B cell (primary cell): ENCODE measurements at regions of chr14 and their contacts with region 1.

Region 1: DNA sequence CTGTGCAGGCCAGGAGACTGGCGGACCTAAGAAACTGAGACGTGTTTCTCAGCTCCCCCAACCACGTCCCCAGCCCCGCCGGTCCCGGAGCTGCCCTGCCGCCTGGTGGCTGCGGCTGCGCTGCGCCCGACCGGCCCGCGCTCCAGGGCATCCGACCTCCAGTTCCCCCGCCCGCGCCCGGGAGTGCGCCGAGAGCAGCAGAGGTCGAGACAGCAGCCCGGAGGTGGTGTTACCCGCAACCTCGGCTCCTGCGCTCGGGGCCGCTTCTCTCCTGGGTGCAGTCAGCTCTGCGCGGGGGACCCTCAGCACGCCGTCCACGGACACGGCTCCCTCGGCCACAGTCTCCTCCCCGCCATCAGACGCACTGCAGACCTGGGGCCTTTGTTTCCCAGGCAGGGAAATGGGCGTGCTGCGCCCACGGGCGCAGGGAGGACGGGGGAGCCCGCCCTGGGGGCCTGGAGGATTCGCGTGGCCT is 21.6 kb upstream of the GPR132 start:
- DNase-seq: peak; percentile 89
- ATAC-seq: peak; percentile 86
- H3K4me3 ChIP-seq: peak overlapping the region in 4 of 5 experiments; percentile 55 to 67 (median 60)
- H3K4me3 Mint-ChIP-seq: peak overlapping the region; percentile 85
- H3K27ac ChIP-seq: peak overlapping the region in 1 of 2 donors; percentile 26
- H3K27ac Mint-ChIP-seq: peak overlapping the region; percentile 37
- H3K4me1 ChIP-seq: peaks cover 9 to 17% of the 10 kb centered on the region in 2 donors
- H3K4me1 Mint-ChIP-seq: peaks cover 16% of the 10 kb centered on the region
- H3K27me3 ChIP-seq: peaks cover 0 to 30% (median 9%) of the 10 kb centered on the region in 4 experiments
- H3K27me3 Mint-ChIP-seq: peaks cover 16% of the 10 kb centered on the region
- CTCF ChIP-seq: peak; percentile 78

Region 2: GRCh38 chr14:104913435-104913834 is 173.4 kb before region 1 on chr14:
- CTCF ChIA-PET with region 1: no interaction called
- POLR2A ChIA-PET with region 1: no interaction called
- intact Hi-C with region 1: no loop called
- DNase-seq: no peak
- ATAC-seq: no peak
- H3K4me3 ChIP-seq: no peak overlapping the region
- H3K4me3 Mint-ChIP-seq: no peak overlapping the region
- H3K27ac ChIP-seq: no peak overlapping the region
- H3K27ac Mint-ChIP-seq: no peak overlapping the region
- H3K4me1 ChIP-seq: no peaks in the 10 kb centered on the region
- H3K4me1 Mint-ChIP-seq: no peaks in the 10 kb centered on the region
- H3K27me3 ChIP-seq: no peaks in the 10 kb centered on the region
- H3K27me3 Mint-ChIP-seq: peaks cover 16% of the 10 kb centered on the region
- CTCF ChIP-seq: no peak

Region 3: DNA sequence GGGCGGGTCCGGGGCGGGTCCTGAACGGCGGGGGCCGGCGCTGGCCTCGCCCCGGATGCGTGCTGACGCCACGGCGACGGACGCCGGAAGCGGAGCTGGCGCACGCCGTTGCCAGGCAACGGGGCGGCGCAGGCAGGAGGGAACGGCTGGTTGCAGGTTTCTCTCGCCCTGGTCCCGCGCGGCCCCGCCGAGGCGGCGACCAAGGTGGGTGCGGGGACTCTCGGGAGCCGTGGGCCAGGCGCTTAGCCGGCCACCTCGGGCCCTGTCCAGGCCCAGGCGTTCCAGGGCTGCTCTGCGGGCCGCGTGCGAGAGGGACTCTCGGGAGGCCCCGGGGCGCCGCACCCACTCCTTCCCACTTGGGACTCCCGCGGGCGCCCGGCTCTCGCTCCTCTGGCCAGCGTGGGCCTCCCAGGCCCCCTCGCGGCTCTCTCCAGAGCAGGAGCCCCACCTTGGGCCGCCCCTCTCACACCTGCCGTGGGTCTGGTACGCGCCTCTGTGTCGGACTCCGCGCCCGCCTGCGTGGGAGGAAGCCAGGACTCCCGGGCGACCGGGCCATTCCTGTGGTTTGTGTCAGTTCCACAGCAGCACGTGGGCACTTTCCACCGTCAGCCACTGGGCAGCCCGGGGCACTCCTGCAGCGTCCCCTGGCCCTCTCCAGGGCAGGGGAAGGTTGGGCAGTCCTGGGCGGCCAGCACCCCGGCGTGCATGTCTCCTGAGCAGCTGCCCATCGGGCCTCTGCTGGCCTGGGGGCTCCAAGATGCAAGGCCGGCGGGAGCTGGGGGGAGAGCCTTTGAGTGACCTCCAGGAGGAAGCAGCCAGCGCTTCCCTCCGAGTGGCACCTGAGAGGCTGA is 101.0 kb before region 1 on chr14 and contains the start of gene CLBA1:
- CTCF ChIA-PET with region 1: interaction called, 4 read pairs
- POLR2A ChIA-PET with region 1: interaction called, 3 read pairs
- intact Hi-C with region 1: loop called (anchors 2 kb)
- DNase-seq: peak; percentile 95
- ATAC-seq: peak; percentile 92
- H3K4me3 ChIP-seq: peak within 1 kb of the TSS in 4 of 5 experiments; percentile 47 to 78 (median 62)
- H3K4me3 Mint-ChIP-seq: peak within 1 kb of the TSS; percentile 79
- H3K27ac ChIP-seq: peak within 1 kb of the TSS in 1 of 2 donors; percentile 73
- H3K27ac Mint-ChIP-seq: peak within 1 kb of the TSS; percentile 67
- H3K4me1 ChIP-seq: peaks cover 7 to 13% of the 10 kb centered on the region in 2 donors
- H3K4me1 Mint-ChIP-seq: peaks cover 7% of the 10 kb centered on the region
- H3K27me3 ChIP-seq: peaks cover 0 to 11% (median 5%) of the 10 kb centered on the region in 4 experiments
- H3K27me3 Mint-ChIP-seq: peaks cover 4% of the 10 kb centered on the region
- CTCF ChIP-seq: no peak
- total RNA-seq, gene CLBA1: 5.3 and 5.5 TPM in 2 replicates

Region 4: GRCh38 chr14:105065280-105066228 is 21.3 kb before region 1 on chr14 and contains the start of gene GPR132:
- CTCF ChIA-PET with region 1: interaction called, 192 read pairs
- POLR2A ChIA-PET with region 1: interaction called, 5 read pairs
- intact Hi-C with region 1: loop called (anchors 1 kb)
- DNase-seq: peak; percentile 96
- ATAC-seq: peak; percentile 78
- H3K4me3 ChIP-seq: peak within 1 kb of the TSS; percentile 81 to 100 (median 91)
- H3K4me3 Mint-ChIP-seq: peak within 1 kb of the TSS; percentile 87
- H3K27ac ChIP-seq: peak within 1 kb of the TSS; percentile 93 to 98
- H3K27ac Mint-ChIP-seq: peak within 1 kb of the TSS; percentile 98
- H3K4me1 ChIP-seq: peaks cover 79 to 95% of the 10 kb centered on the region in 2 donors
- H3K4me1 Mint-ChIP-seq: peaks cover 82% of the 10 kb centered on the region
- H3K27me3 ChIP-seq: no peaks in the 10 kb centered on the region
- H3K27me3 Mint-ChIP-seq: no peaks in the 10 kb centered on the region
- CTCF ChIP-seq: no peak
- total RNA-seq, gene GPR132: 54.5 and 63.2 TPM in 2 replicates

Region 5: DNA sequence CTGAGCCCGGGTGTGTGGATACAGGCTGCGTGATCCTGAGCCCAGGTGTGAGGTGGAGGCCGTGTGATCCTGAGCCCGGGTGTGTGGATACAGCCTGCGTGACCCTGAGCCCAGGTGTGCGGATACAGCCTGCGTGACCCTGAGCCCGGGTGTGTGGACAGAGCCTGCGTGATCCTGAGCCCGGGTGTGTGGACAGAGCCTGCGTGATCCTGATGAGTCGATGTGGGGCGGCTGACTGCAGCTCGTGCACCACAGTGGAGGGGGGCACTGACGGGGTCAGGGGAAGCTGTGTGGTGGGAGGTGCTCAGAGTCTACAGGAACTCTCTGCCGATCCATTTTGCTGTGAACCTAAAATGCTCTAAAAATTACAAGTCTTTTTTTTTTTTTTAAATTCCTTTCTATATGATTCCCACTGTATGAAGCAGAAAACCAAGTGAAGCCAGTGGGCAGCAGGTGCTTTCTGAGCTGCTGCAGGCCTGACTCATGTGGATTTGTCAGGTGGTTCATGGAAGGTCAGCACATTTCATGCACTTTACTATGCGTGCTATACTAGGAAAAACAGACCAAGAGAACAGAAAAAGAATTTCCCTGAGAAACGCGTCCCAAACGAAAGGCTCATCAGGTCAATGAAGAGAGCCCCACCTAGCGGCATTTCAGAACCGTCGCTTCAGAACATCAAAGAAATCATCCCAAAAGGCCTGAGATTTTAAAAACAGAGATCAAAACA is 194.7 kb after region 1 on chr14:
- CTCF ChIA-PET with region 1: interaction called, 4 read pairs
- POLR2A ChIA-PET with region 1: no interaction called
- intact Hi-C with region 1: loop called (anchors 5 kb)
- DNase-seq: peak; percentile 50
- ATAC-seq: no peak
- H3K4me3 ChIP-seq: no peak overlapping the region
- H3K4me3 Mint-ChIP-seq: no peak overlapping the region
- H3K27ac ChIP-seq: no peak overlapping the region
- H3K27ac Mint-ChIP-seq: no peak overlapping the region
- H3K4me1 ChIP-seq: peaks cover 9 to 15% of the 10 kb centered on the region in 2 donors
- H3K4me1 Mint-ChIP-seq: peaks cover 17% of the 10 kb centered on the region
- H3K27me3 ChIP-seq: no peaks in the 10 kb centered on the region
- H3K27me3 Mint-ChIP-seq: no peaks in the 10 kb centered on the region
- CTCF ChIP-seq: peak; percentile 32

Region 6: DNA sequence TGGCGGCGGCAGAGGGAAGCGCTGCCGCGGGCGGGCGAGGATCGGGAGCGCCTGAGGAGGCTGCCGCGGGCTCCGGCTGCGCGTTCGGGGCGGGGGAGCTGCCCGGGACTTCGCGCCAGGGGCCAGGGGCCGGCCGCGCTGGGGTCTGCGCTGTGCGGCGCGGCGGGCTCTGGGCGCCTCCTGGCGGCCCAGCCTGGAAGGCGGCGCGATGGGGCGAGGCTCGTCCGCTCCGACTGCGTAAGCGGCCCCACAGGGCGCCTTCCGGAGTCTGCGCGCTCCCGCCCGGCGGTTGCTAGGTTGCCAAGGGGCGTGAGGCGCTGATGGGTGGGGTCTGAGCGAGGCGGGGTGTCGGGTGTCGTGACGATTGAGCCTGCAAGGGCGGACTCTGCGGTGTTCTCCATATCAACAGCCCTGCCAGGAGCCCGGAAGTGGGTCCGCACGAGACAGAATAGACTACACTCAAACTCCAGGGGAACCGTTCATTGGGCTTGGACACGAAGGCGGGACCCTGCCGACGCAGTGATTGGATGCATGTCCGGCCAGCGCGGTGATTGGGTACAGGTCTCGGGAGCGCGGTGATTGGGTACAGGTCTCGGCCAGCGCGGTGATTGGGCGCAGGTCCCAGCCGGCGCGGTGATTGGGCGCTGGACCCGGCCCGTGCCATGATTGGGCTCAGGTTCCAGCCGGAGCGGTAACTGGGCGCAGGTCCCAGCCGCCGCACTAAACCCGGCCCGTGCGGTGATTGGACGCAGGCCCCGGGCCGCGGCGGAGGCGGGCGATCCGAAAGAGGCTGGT is 403.9 kb after region 1 on chr14 and contains the start of gene TEDC1:
- CTCF ChIA-PET with region 1: interaction called, 3 read pairs
- POLR2A ChIA-PET with region 1: no interaction called
- intact Hi-C with region 1: loop called (anchors 5 kb)
- DNase-seq: peak; percentile 100
- ATAC-seq: peak; percentile 69
- H3K4me3 ChIP-seq: peak within 1 kb of the TSS in 4 of 5 experiments; percentile 65 to 89 (median 79)
- H3K4me3 Mint-ChIP-seq: peak within 1 kb of the TSS; percentile 90
- H3K27ac ChIP-seq: peak within 1 kb of the TSS; percentile 95 to 96
- H3K27ac Mint-ChIP-seq: peak within 1 kb of the TSS; percentile 97
- H3K4me1 ChIP-seq: peaks cover 33 to 49% of the 10 kb centered on the region in 2 donors
- H3K4me1 Mint-ChIP-seq: peaks cover 35% of the 10 kb centered on the region
- H3K27me3 ChIP-seq: no peaks in the 10 kb centered on the region
- H3K27me3 Mint-ChIP-seq: no peaks in the 10 kb centered on the region
- CTCF ChIP-seq: peak; percentile 82
- total RNA-seq, gene TEDC1: 22.2 and 25.9 TPM in 2 replicates